Common myeloid progenitor, CD34-positive (primary cell): ENCODE measurements at regions of chr9 and their contacts with region 1.

Region 1: GRCh38 chr9:125758986-125759763 is 12.0 kb downstream of the PBX3 start:
- DNase-seq: peak; percentile 84 to 98 (median 95)
- H3K4me3 ChIP-seq: peak overlapping the region in 6 of 7 experiments; percentile 58 to 88 (median 62)
- H3K27ac ChIP-seq: peak overlapping the region; percentile 77 to 81
- H3K4me1 ChIP-seq: peaks cover 18 to 79% (median 39%) of the 10 kb centered on the region in 4 experiments
- H3K27me3 ChIP-seq: no peaks in the 10 kb centered on the region

Region 2: DNA sequence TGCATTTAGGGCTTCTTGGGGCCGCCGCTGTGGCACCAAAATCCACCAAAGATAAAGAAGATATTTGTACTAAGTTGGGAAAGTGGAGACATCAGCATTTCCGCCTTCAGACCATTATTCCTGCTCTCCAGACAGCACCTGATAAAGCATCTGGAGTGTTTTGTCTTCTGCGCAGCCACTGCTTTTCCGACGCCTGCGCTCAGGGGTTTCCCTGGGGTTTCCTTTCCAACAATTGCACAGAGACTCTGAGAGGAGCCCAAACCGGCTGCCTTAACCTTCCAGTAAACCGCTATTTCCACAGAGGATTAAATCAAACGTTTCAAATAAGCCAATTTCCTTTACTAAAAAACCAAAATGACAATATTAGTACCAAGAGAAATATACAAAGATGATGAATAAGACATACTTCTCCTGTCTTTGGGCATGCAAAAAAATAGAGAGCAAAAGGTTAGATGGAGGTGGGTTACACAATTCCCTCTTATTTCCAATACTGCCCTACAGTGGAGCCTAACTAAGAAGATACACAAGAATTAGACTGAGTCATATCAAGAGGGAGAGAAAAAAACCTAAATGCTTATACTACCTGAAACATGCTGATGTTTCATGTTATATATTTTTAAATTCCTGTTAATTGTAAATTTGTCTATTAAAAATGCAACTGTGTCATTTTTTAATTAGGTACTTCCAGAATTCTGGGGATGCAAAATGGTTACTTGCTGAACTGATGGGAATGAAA is 150.5 kb before region 1 on chr9:
- CTCF ChIA-PET with region 1: no interaction called
- POLR2A ChIA-PET with region 1: no interaction called
- DNase-seq: no peak
- H3K4me3 ChIP-seq: no peak overlapping the region
- H3K27ac ChIP-seq: no peak overlapping the region
- H3K4me1 ChIP-seq: no peaks in the 10 kb centered on the region
- H3K27me3 ChIP-seq: no peaks in the 10 kb centered on the region

Region 3: DNA sequence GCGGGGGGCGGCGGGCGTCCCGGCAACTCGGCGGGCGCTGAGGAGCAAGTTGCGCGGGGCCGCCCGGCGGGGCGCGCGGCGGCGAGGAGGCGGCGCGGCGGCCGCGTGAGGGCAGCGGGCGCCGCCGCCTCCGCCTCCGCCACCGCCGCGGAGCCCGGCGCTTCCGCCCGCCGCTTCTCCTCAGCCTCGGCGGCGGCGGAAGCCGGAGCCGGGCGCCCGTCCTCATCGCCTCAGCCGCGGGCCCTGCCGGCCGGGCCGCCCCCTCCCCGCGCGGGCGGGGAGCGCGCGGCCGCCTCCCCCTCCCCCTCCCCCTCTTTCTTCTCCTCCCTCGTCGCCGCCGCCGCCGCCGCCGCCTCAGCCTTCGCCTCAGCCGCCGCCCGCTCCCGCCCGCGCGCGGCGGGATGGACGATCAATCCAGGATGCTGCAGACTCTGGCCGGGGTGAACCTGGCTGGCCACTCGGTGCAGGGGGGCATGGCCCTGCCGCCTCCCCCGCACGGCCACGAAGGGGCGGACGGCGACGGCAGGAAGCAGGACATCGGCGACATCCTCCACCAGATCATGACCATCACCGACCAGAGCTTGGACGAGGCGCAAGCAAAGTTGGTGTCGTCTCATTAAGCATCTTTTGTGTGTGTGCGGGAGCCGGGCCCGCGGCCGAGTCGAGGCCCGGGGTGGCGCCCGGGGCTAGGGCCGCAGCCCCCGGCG is 12.0 kb before region 1 on chr9 and contains the start of gene PBX3:
- CTCF ChIA-PET with region 1: interaction called, 5 read pairs
- POLR2A ChIA-PET with region 1: interaction called, 15 read pairs
- DNase-seq: peak; percentile 40 to 76 (median 71)
- H3K4me3 ChIP-seq: peak within 1 kb of the TSS; percentile 74 to 98 (median 93)
- H3K27ac ChIP-seq: peak within 1 kb of the TSS; percentile 33 to 74
- H3K4me1 ChIP-seq: peaks cover 0 to 43% (median 26%) of the 10 kb centered on the region in 4 experiments
- H3K27me3 ChIP-seq: no peaks in the 10 kb centered on the region

Region 4: DNA sequence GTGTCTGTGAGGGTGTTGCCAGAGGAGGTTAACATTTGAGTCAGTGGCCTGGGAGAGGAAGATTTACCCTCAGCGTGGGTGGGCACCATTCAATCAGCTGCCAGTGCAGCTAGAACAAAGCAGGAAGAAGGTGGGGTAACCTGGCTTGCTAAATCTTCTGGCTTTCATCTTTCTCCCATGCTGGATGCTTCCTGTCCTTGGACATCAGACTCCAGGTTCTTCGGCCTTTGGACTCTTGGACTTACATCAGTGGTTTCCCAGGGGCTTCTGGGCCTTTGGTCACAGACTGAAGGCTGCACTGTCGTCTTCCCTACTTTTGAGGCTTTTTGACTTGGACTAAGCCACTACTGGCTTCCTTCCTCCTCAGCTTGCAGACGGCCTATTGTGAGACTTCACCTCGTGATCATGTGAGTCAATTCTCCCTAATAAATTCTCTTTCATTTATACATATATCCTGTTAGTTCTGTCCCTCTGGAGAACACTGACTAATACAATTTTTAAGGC is 26.1 kb after region 1 on chr9:
- CTCF ChIA-PET with region 1: no interaction called
- POLR2A ChIA-PET with region 1: no interaction called
- DNase-seq: peak in 2 of 3 donors; percentile 52 to 74
- H3K4me3 ChIP-seq: peak overlapping the region in 1 of 7 experiments; percentile 16
- H3K27ac ChIP-seq: peak overlapping the region in 1 of 2 experiments; percentile 60
- H3K4me1 ChIP-seq: peaks cover 0 to 12% (median 9%) of the 10 kb centered on the region in 4 experiments
- H3K27me3 ChIP-seq: no peaks in the 10 kb centered on the region